IMR-90 (cell line): ENCODE measurements at regions of chr18 and their contacts with region 1.

Region 1: DNA sequence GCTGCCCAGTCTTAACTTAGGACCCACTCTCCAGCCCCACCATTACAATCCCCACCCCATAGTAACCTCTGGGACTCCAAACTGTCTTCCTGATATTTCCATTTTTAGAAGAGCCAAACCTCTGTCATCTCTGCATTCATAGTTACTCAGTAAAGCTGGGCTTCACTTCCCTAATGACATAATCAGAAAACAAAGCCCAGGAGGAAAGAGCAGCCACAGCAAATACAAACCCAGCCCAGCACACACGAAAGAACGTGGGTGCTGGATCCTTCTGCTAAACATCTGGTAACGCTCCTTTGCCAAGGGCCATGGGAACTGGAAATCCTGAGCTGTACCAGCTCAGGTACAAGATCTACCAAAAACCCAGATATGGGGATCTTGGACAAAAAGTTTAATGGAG is 36.8 kb upstream of the RIOK3 start:
- DNase-seq: no peak
- ATAC-seq: no peak
- H3K4me3 ChIP-seq: no peak overlapping the region
- H3K27ac ChIP-seq: no peak overlapping the region
- H3K4me1 ChIP-seq: no peaks in the 10 kb centered on the region
- H3K27me3 ChIP-seq: no peaks in the 10 kb centered on the region
- CTCF ChIP-seq: no peak
- POLR2A ChIP-seq: no peak
- RAD21 ChIP-seq: no peak

Region 2: GRCh38 chr18:22813648-22814328 is 602.5 kb before region 1 on chr18:
- CTCF ChIA-PET with region 1: no interaction called
- POLR2A ChIA-PET with region 1: no interaction called
- dilution Hi-C with region 1: no loop called
- in situ Hi-C with region 1: loop called (anchors 10 kb)
- intact Hi-C with region 1: loop called (anchors 10 kb)
- DNase-seq: peak; percentile 65
- ATAC-seq: peak; percentile 86
- H3K4me3 ChIP-seq: no peak overlapping the region
- H3K27ac ChIP-seq: no peak overlapping the region
- H3K4me1 ChIP-seq: no peaks in the 10 kb centered on the region
- H3K27me3 ChIP-seq: no peaks in the 10 kb centered on the region
- CTCF ChIP-seq: peak; percentile 85
- POLR2A ChIP-seq: peak; percentile 52; the same call in 1 of the 2 replicates
- RAD21 ChIP-seq: peak; percentile 96

Region 3: GRCh38 chr18:22933206-22933957 is 482.9 kb before region 1 on chr18 and contains the start of gene RBBP8:
- CTCF ChIA-PET with region 1: no interaction called
- POLR2A ChIA-PET with region 1: no interaction called
- dilution Hi-C with region 1: no loop called
- in situ Hi-C with region 1: no loop called
- intact Hi-C with region 1: loop called (anchors 5 kb)
- DNase-seq: peak; percentile 75
- ATAC-seq: peak; percentile 96
- H3K4me3 ChIP-seq: peak within 1 kb of the TSS; percentile 86
- H3K27ac ChIP-seq: peak within 1 kb of the TSS; percentile 84
- H3K4me1 ChIP-seq: no peaks in the 10 kb centered on the region
- H3K27me3 ChIP-seq: no peaks in the 10 kb centered on the region
- CTCF ChIP-seq: no peak
- POLR2A ChIP-seq: peak; percentile 84
- RAD21 ChIP-seq: no peak
- total RNA-seq, gene RBBP8: 21.1 and 25.3 TPM in 2 replicates

Region 4: DNA sequence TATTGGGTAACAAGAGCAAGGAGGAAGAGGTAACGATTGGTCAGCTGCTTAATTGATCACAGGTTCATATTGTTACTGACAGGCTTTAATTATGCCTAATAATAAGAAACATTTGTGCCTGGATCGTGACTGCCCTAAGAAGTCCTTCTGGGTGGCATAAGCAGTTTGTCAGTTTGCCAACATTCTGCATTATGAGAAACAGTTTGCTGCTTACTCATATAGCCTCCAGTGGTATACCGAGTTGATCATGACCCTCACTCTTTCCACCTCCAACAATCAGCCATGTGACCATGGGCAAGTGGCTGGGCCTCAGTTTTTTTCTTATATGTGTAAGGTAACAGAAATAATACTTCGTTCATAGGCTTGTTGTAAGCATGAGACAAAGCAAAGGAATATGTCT is 377.6 kb before region 1 on chr18:
- CTCF ChIA-PET with region 1: no interaction called
- POLR2A ChIA-PET with region 1: no interaction called
- dilution Hi-C with region 1: no loop called
- in situ Hi-C with region 1: loop called (anchors 5 kb)
- intact Hi-C with region 1: no loop called
- DNase-seq: peak; percentile 53
- ATAC-seq: no peak
- H3K4me3 ChIP-seq: no peak overlapping the region
- H3K27ac ChIP-seq: no peak overlapping the region
- H3K4me1 ChIP-seq: no peaks in the 10 kb centered on the region; the same call in 1 of the 2 replicates
- H3K27me3 ChIP-seq: no peaks in the 10 kb centered on the region
- CTCF ChIP-seq: no peak
- POLR2A ChIP-seq: no peak
- RAD21 ChIP-seq: no peak

Region 5: DNA sequence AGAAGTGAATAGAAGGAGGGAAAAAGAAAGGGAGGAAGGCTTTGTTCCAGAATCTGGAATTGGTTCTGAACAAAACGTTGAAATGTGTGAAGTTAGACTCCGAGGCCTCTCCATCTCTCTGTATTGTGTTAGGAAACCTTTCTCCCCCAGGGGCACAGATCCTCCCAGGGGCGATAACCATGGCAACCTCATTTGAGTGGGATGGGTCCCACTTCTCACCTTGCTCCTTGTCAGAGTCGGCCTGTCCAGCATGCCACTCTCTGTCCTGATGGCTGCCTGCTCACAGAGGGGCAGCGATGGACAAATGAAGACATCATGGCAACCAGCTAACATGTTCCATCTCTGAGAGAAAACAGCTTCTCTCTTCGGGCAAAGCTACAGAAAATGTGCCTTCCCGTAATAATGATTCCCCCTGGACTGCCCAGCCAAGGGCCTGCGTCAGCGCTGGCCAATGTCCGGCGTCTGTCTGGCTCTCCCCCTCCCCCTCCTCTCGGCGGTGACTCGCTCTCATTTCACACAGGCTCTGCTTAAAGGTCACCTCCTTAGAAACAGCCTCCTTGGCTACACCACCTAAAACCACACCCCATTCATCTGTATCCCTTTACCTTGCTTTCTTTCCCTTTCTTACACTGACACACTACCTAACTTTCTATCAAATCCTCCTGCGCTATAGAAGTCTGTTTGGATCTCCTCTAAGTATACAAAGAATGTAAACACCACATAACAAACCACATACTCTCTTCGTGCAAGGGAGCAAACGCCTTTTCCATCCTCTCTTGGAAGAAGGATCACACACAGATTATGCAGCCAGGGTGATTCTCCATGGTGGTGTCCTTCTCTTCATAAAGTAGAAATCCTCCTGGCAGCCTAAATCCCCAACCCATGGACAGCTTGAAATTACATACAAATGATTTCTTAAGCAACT is 566.1 kb after region 1 on chr18:
- CTCF ChIA-PET with region 1: no interaction called
- POLR2A ChIA-PET with region 1: no interaction called
- dilution Hi-C with region 1: no loop called
- in situ Hi-C with region 1: no loop called
- intact Hi-C with region 1: no loop called
- DNase-seq: peak; percentile 75
- ATAC-seq: peak; percentile 97
- H3K4me3 ChIP-seq: peak overlapping the region; percentile 38; the same call in 1 of the 2 replicates
- H3K27ac ChIP-seq: peak overlapping the region; percentile 94
- H3K4me1 ChIP-seq: peaks cover 15% of the 10 kb centered on the region
- H3K27me3 ChIP-seq: no peaks in the 10 kb centered on the region
- CTCF ChIP-seq: no peak
- POLR2A ChIP-seq: 0 out of 2 replicates have a peak, but pooled peaks have one; percentile 45
- RAD21 ChIP-seq: no peak; the same call in 1 of the 2 replicates